WTC11 (cell line): ENCODE measurements at regions of chr2 and their contacts with region 1.

Region 1: GRCh38 chr2:238731961-238732360 is 115.9 kb upstream of the TWIST2 start:
- DNase-seq: no peak
- ATAC-seq: no peak
- H3K4me3 Mint-ChIP-seq: no peak overlapping the region
- H3K27ac Mint-ChIP-seq: no peak overlapping the region
- H3K4me1 Mint-ChIP-seq: no peaks in the 10 kb centered on the region
- H3K27me3 Mint-ChIP-seq: no peaks in the 10 kb centered on the region; the same call in 1 of the 2 replicates
- CTCF ChIP-seq: no peak

Region 2: GRCh38 chr2:238523158-238524110 is 208.5 kb before region 1 on chr2:
- CTCF ChIA-PET with region 1: no interaction called
- POLR2A ChIA-PET with region 1: no interaction called
- DNase-seq: peak; percentile 71
- ATAC-seq: peak; percentile 97
- H3K4me3 Mint-ChIP-seq: no peak overlapping the region
- H3K27ac Mint-ChIP-seq: no peak overlapping the region
- H3K4me1 Mint-ChIP-seq: peaks cover 9% of the 10 kb centered on the region
- H3K27me3 Mint-ChIP-seq: no peaks in the 10 kb centered on the region; the same call in 1 of the 2 replicates
- CTCF ChIP-seq: no peak

Region 3: DNA sequence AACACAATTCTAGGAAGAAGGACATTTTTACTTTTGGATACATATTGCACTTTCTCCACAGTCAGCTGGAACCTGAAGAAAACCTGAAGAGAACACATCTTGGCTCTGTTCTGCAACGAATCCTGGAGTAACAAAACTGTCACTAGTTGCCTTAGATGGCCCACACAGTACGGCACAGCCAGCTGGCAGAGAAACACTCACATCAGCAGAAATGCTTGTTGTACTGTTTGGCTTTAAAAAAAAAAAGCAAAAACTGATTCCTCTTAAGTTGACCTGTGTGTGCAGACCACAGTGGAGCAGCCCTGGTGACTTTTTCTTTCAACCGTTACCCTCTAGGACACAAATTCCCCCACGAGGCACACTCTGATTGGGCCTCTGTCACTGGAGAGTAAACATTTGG is 36.4 kb before region 1 on chr2:
- CTCF ChIA-PET with region 1: no interaction called
- POLR2A ChIA-PET with region 1: no interaction called
- DNase-seq: no peak
- ATAC-seq: no peak
- H3K4me3 Mint-ChIP-seq: no peak overlapping the region
- H3K27ac Mint-ChIP-seq: no peak overlapping the region
- H3K4me1 Mint-ChIP-seq: no peaks in the 10 kb centered on the region
- H3K27me3 Mint-ChIP-seq: no peaks in the 10 kb centered on the region
- CTCF ChIP-seq: no peak

Region 4: DNA sequence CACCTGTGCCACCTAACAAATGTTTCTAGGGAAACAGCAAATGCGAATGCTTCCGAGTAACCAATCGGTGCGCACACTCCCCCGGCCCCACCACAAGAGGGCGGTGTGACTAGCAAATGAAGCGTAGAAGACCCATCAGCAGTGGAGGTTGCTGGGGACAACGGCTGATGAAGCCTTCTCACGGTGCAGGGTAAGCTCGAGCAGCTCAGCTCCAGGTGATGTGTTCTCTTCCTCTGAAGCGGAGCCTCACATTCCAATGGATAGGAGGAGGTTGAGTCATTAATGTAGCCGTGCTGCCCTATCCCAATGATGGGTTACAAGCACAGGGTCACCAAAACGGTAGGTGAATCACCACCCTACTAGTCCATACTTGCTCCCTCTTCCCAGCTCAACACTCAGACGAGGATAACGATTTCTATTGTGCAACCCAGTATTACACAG is 11.7 kb before region 1 on chr2:
- CTCF ChIA-PET with region 1: interaction called, 10 read pairs
- POLR2A ChIA-PET with region 1: interaction called, 3 read pairs
- DNase-seq: peak; percentile 86
- ATAC-seq: peak; percentile 97
- H3K4me3 Mint-ChIP-seq: no peak overlapping the region
- H3K27ac Mint-ChIP-seq: no peak overlapping the region
- H3K4me1 Mint-ChIP-seq: peaks cover 10% of the 10 kb centered on the region
- H3K27me3 Mint-ChIP-seq: peaks cover 6% of the 10 kb centered on the region; the same call in 1 of the 2 replicates
- CTCF ChIP-seq: peak; percentile 68